Endothelial cell of umbilical vein (primary cell): ENCODE measurements at regions of chr20 and their contacts with region 1.

Region 1: GRCh38 chr20:45095753-45096371 is 5.1 kb downstream of the KCNS1 start:
- DNase-seq: peak; percentile 52
- H3K4me3 ChIP-seq: no peak overlapping the region
- H3K27ac ChIP-seq: no peak overlapping the region
- H3K4me1 ChIP-seq: peaks cover under 1% of the 10 kb centered on the region
- H3K27me3 ChIP-seq: peaks cover 23 to 30% of the 10 kb centered on the region in 2 experiments
- CTCF ChIP-seq: peak; percentile 53 to 79
- POLR2A ChIP-seq: no peak

Region 2: GRCh38 chr20:44909872-44910689 is 185.8 kb before region 1 on chr20 and contains the start of gene PABPC1L:
- CTCF ChIA-PET with region 1: interaction called, 4 read pairs
- POLR2A ChIA-PET with region 1: no interaction called
- dilution Hi-C with region 1: no loop called
- intact Hi-C with region 1: loop called (anchors 1 kb)
- DNase-seq: no peak
- H3K4me3 ChIP-seq: peak within 1 kb of the TSS; percentile 43 to 62 (median 51)
- H3K27ac ChIP-seq: no peak within 1 kb of the TSS
- H3K4me1 ChIP-seq: peaks cover 12% of the 10 kb centered on the region
- H3K27me3 ChIP-seq: no peaks in the 10 kb centered on the region
- CTCF ChIP-seq: no peak
- POLR2A ChIP-seq: peak; percentile 47
- total RNA-seq, gene PABPC1L: 7.5 and 7.8 TPM in 2 replicates

Region 3: GRCh38 chr20:44990425-44990824 is 105.4 kb before region 1 on chr20:
- CTCF ChIA-PET with region 1: no interaction called
- POLR2A ChIA-PET with region 1: no interaction called
- dilution Hi-C with region 1: no loop called
- intact Hi-C with region 1: no loop called
- DNase-seq: no peak
- H3K4me3 ChIP-seq: no peak overlapping the region
- H3K27ac ChIP-seq: no peak overlapping the region
- H3K4me1 ChIP-seq: peaks cover 17% of the 10 kb centered on the region
- H3K27me3 ChIP-seq: no peaks in the 10 kb centered on the region
- CTCF ChIP-seq: no peak
- POLR2A ChIP-seq: no peak

Region 4: GRCh38 chr20:45011108-45011526 is 84.7 kb before region 1 on chr20:
- CTCF ChIA-PET with region 1: interaction called, 106 read pairs
- POLR2A ChIA-PET with region 1: no interaction called
- dilution Hi-C with region 1: no loop called
- intact Hi-C with region 1: loop called (anchors 1 kb)
- DNase-seq: peak; percentile 74
- H3K4me3 ChIP-seq: no peak overlapping the region
- H3K27ac ChIP-seq: no peak overlapping the region
- H3K4me1 ChIP-seq: no peaks in the 10 kb centered on the region
- H3K27me3 ChIP-seq: no peaks in the 10 kb centered on the region
- CTCF ChIP-seq: peak; percentile 67 to 68
- POLR2A ChIP-seq: no peak

Region 5: DNA sequence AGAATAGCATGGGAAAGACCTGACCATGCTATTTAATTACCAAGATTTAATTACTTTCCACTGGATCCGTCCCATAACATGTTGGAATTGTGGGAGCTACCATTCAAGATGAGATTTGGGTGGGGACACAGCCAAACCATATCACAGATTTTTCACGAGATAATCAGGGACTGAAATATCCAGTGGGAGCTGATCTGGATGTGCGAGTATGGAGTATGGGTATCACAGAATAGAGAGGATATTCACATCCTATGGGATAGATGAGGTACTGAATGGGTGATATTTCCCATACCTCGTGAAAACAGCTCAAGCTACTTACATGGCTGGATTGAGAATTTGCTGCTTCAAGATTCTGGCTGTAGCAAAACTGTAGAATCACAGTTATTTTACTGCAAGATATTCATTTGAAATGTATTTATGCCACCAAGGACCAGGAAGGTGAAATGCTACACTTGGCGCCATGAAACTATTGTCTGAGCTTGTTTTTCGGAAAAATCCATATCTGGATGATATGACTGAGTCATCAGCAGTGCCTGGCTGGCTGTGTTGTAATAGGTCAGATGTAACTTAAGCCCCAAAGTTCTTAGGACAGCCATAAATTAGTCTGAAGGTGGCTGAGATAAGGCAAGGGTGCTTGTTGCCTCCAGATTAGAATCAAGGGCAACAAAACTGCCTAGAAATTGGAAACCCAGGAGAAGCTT is 24.8 kb before region 1 on chr20:
- CTCF ChIA-PET with region 1: interaction called, 33 read pairs
- POLR2A ChIA-PET with region 1: no interaction called
- dilution Hi-C with region 1: no loop called
- intact Hi-C with region 1: no loop called
- DNase-seq: peak; percentile 94
- H3K4me3 ChIP-seq: no peak overlapping the region
- H3K27ac ChIP-seq: peak overlapping the region; percentile 15
- H3K4me1 ChIP-seq: peaks cover 8% of the 10 kb centered on the region
- H3K27me3 ChIP-seq: no peaks in the 10 kb centered on the region
- CTCF ChIP-seq: no peak
- POLR2A ChIP-seq: no peak

Region 6: GRCh38 chr20:45111799-45112471 is 16.1 kb after region 1 on chr20:
- CTCF ChIA-PET with region 1: interaction called, 187 read pairs
- POLR2A ChIA-PET with region 1: no interaction called
- dilution Hi-C with region 1: no loop called
- intact Hi-C with region 1: no loop called
- DNase-seq: peak; percentile 26
- H3K4me3 ChIP-seq: no peak overlapping the region
- H3K27ac ChIP-seq: no peak overlapping the region
- H3K4me1 ChIP-seq: no peaks in the 10 kb centered on the region
- H3K27me3 ChIP-seq: peaks cover 0 to 4% of the 10 kb centered on the region in 2 experiments
- CTCF ChIP-seq: peak; percentile 47 to 51
- POLR2A ChIP-seq: no peak

Region 7: DNA sequence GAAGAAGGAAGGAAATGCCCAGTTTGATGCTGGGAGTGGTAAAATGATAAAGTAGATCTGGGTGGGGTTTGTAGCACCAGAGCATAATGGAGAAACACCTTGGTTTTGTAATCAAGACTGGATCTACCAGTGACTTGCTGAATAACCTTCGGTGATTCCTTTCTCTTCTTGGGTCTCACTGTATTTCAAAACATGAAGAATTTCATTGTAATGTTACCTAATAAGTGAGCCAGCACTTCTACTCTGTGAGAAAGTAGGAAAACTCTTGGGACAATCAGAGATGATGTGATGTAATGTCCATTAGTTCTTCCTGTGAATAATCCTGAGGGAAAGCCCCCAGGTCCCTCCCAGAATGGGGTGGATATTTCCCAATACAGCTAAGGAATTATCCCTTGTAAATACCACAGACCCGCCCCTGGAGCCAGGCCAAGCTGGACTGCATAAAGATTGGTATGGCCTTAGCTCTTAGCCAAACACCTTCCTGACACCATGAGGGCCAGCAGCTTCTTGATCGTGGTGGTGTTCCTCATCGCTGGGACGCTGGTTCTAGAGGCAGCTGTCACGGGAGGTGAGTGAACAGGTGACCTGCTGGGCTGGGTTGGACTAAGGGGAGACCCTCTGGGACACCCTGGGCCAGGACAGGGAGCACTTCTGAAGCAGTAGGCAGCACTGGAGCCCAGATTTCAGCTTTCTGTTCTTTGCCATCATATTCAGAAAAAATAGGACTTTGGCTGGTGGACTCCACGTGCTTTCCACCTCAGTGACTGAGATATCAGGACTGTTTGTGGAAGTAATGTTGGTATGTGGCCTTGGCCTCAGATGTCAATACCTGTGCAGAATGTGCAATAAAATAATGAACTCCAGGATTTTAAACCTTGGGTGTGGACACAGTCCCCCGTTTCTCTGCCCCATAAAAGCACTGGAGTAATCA is 78.8 kb after region 1 on chr20 and contains the start of gene PI3:
- CTCF ChIA-PET with region 1: no interaction called
- POLR2A ChIA-PET with region 1: no interaction called
- dilution Hi-C with region 1: no loop called
- intact Hi-C with region 1: no loop called
- DNase-seq: no peak
- H3K4me3 ChIP-seq: no peak within 1 kb of the TSS
- H3K27ac ChIP-seq: no peak within 1 kb of the TSS
- H3K4me1 ChIP-seq: no peaks in the 10 kb centered on the region
- H3K27me3 ChIP-seq: peaks cover 4 to 9% of the 10 kb centered on the region in 2 experiments
- CTCF ChIP-seq: no peak
- POLR2A ChIP-seq: no peak
- total RNA-seq, gene PI3: not detected in 2 replicates

Region 8: DNA sequence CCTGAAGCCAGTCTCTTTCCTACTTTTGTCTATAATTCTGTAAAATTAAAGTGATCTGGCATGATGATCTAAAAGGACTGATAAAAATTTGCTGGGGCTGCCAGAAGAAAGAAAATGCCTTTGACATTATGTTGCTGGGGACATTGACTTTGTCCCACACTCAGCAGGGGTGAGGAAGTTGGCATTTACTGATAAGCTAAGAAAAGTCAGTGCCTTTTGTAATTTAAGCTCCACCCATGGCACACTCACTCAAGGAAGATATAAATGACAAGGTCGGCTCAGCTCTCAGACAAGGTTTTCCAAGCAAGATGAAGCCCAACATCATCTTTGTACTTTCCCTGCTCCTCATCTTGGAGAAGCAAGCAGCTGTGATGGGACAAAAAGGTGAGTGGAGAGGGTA is 110.9 kb after region 1 on chr20 and contains the start of gene SEMG1:
- CTCF ChIA-PET with region 1: no interaction called
- POLR2A ChIA-PET with region 1: no interaction called
- dilution Hi-C with region 1: no loop called
- intact Hi-C with region 1: no loop called
- DNase-seq: no peak
- H3K4me3 ChIP-seq: no peak within 1 kb of the TSS
- H3K27ac ChIP-seq: no peak within 1 kb of the TSS
- H3K4me1 ChIP-seq: no peaks in the 10 kb centered on the region
- H3K27me3 ChIP-seq: peaks cover 0 to 2% of the 10 kb centered on the region in 2 experiments
- CTCF ChIP-seq: no peak
- POLR2A ChIP-seq: no peak
- total RNA-seq, gene SEMG1: not detected in 2 replicates